ENCODE measurements at regions of chr10 and their contacts with region 1.

Region 1: GRCh38 chr10:14578060-14578952 is 196.4 kb downstream of the FAM107B start:
- DNase-seq: peak; percentile 89 to 92
- H3K4me3 ChIP-seq: peak overlapping the region; percentile 24
- H3K4me3 Mint-ChIP-seq: peak overlapping the region; percentile 70
- H3K27ac Mint-ChIP-seq: peak overlapping the region; percentile 88
- H3K4me1 ChIP-seq: peaks cover 66% of the 10 kb centered on the region
- H3K4me1 Mint-ChIP-seq: peaks cover 38% of the 10 kb centered on the region
- H3K27me3 ChIP-seq: no peaks in the 10 kb centered on the region
- H3K27me3 Mint-ChIP-seq: no peaks in the 10 kb centered on the region
- CTCF ChIP-seq: no peak

Region 2: DNA sequence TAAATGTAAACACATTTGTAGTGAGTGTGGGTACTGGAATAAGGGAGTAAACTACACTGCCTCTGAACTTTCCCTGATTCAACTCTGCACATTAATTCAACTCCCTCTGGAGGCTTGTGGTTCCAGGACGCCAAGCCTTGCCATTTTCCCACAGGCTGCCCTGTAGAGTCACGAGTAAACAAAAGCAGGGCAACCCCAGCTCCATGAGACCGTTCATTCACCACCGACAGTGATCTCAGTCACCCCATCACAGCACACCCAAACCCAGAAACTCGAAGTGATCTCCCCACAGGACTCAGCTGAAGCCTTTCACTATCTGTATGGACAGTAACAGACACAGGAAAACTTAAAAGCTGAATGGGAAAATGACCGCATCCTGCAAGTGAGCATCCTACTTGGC is 28.8 kb before region 1 on chr10:
- CTCF ChIA-PET with region 1: interaction called, 3 read pairs
- POLR2A ChIA-PET with region 1: interaction called, 11 read pairs
- intact Hi-C with region 1: loop called (anchors 1 kb)
- DNase-seq: no peak
- H3K4me3 ChIP-seq: no peak overlapping the region
- H3K4me3 Mint-ChIP-seq: peak overlapping the region; percentile 59
- H3K27ac Mint-ChIP-seq: peak overlapping the region; percentile 93
- H3K4me1 ChIP-seq: peaks cover 91% of the 10 kb centered on the region
- H3K4me1 Mint-ChIP-seq: peaks cover 80% of the 10 kb centered on the region
- H3K27me3 ChIP-seq: no peaks in the 10 kb centered on the region
- H3K27me3 Mint-ChIP-seq: no peaks in the 10 kb centered on the region
- CTCF ChIP-seq: no peak

Region 3: GRCh38 chr10:14604181-14605142 is 26.2 kb after region 1 on chr10:
- CTCF ChIA-PET with region 1: no interaction called
- POLR2A ChIA-PET with region 1: interaction called, 10 read pairs
- intact Hi-C with region 1: no loop called
- DNase-seq: peak; percentile 79 to 89
- H3K4me3 ChIP-seq: peak overlapping the region; percentile 49
- H3K4me3 Mint-ChIP-seq: peak overlapping the region; percentile 80
- H3K27ac Mint-ChIP-seq: peak overlapping the region; percentile 43
- H3K4me1 ChIP-seq: peaks cover 51% of the 10 kb centered on the region
- H3K4me1 Mint-ChIP-seq: peaks cover 40% of the 10 kb centered on the region
- H3K27me3 ChIP-seq: no peaks in the 10 kb centered on the region
- H3K27me3 Mint-ChIP-seq: no peaks in the 10 kb centered on the region
- CTCF ChIP-seq: no peak

Region 4: DNA sequence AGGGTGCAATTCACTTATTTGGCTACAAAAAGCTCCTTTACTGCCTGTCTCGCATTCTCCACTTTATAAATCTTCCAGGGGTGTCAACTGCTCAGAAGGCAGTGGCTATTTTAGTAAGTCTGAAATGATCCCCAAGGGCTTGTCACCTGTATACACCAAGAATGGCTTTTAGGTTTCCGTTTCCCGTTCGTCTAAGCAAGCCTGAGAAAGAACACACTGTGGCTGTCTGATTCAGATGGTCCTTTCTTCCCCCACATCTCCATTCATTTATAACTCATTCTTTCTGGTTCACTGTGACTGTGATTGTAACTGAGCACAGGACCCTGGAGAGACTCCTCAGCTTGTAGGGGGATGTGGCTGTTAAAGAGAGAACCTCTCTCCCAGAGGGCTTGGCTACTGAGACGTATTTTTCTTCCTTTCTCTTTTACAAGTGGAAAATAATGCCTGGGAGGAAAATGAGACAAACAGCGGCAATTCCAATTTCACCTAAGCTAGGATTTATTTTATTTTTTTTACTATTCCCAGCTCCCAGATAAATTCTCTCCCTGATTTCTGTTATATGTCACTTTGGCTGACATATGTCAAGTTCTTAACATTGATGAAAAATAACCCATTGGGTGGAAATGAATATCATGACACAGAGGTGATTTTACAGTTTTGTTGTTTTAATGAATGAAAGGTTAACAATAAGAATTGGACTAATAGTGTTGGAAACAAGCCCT is 67.1 kb after region 1 on chr10:
- CTCF ChIA-PET with region 1: no interaction called
- POLR2A ChIA-PET with region 1: no interaction called
- intact Hi-C with region 1: no loop called
- DNase-seq: no peak
- H3K4me3 ChIP-seq: no peak overlapping the region
- H3K4me3 Mint-ChIP-seq: no peak overlapping the region
- H3K27ac Mint-ChIP-seq: no peak overlapping the region
- H3K4me1 ChIP-seq: peaks cover 9% of the 10 kb centered on the region
- H3K4me1 Mint-ChIP-seq: no peaks in the 10 kb centered on the region
- H3K27me3 ChIP-seq: no peaks in the 10 kb centered on the region
- H3K27me3 Mint-ChIP-seq: no peaks in the 10 kb centered on the region
- CTCF ChIP-seq: no peak

Region 5: GRCh38 chr10:14693891-14694290 is 115.6 kb after region 1 on chr10:
- CTCF ChIA-PET with region 1: no interaction called
- POLR2A ChIA-PET with region 1: no interaction called
- intact Hi-C with region 1: no loop called
- DNase-seq: no peak
- H3K4me3 ChIP-seq: no peak overlapping the region
- H3K4me3 Mint-ChIP-seq: no peak overlapping the region
- H3K27ac Mint-ChIP-seq: no peak overlapping the region
- H3K4me1 ChIP-seq: peaks cover 27% of the 10 kb centered on the region
- H3K4me1 Mint-ChIP-seq: peaks cover 30% of the 10 kb centered on the region
- H3K27me3 ChIP-seq: no peaks in the 10 kb centered on the region
- H3K27me3 Mint-ChIP-seq: no peaks in the 10 kb centered on the region
- CTCF ChIP-seq: no peak

Region 6: DNA sequence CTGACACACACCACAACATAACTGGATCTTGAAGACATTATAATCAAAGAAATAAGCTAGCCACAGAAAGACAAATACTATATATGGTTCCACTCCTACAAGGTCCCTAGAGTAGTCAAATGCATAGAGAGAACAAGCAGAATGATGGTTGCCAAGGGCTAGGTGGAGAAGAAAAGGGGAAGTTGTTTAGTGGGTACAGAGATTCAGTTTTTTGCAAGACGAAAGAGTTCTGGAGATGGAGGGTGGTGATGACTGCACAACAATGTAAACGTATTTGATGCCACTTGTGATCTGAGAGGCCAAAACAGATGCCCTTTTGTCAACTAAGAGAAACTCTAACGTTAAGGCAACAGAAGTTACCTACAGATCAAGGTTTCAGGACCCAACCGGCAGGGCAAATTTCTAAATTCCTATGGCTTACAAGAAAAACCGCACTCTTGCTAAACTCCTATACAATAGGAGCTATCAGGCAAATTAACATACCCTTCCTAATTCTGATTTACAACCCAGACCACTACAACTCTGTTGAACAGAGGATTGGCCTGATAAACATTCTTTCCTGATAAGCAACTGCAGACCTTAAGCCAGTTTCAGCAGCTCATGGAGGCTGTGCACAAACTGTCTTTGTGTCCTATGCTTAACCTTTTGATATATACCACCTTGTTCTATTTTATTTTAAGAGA is 127.4 kb after region 1 on chr10:
- CTCF ChIA-PET with region 1: interaction called, 3 read pairs
- POLR2A ChIA-PET with region 1: no interaction called
- intact Hi-C with region 1: loop called (anchors 1 kb)
- DNase-seq: peak in 1 of 2 experiments; percentile 68
- H3K4me3 ChIP-seq: no peak overlapping the region
- H3K4me3 Mint-ChIP-seq: no peak overlapping the region
- H3K27ac Mint-ChIP-seq: peak overlapping the region; percentile 3
- H3K4me1 ChIP-seq: peaks cover 53% of the 10 kb centered on the region
- H3K4me1 Mint-ChIP-seq: peaks cover 37% of the 10 kb centered on the region
- H3K27me3 ChIP-seq: no peaks in the 10 kb centered on the region
- H3K27me3 Mint-ChIP-seq: no peaks in the 10 kb centered on the region
- CTCF ChIP-seq: no peak

Region 7: GRCh38 chr10:14822879-14823755 is 244.8 kb after region 1 on chr10:
- CTCF ChIA-PET with region 1: interaction called, 3 read pairs
- POLR2A ChIA-PET with region 1: interaction called, 11 read pairs
- intact Hi-C with region 1: no loop called
- DNase-seq: peak in 1 of 2 experiments; percentile 64
- H3K4me3 ChIP-seq: no peak overlapping the region
- H3K4me3 Mint-ChIP-seq: peak overlapping the region; percentile 18
- H3K27ac Mint-ChIP-seq: peak overlapping the region; percentile 71
- H3K4me1 ChIP-seq: peaks cover 32% of the 10 kb centered on the region
- H3K4me1 Mint-ChIP-seq: peaks cover 35% of the 10 kb centered on the region
- H3K27me3 ChIP-seq: no peaks in the 10 kb centered on the region
- H3K27me3 Mint-ChIP-seq: peaks cover 6% of the 10 kb centered on the region
- CTCF ChIP-seq: peak; percentile 76 to 87

Region 8: DNA sequence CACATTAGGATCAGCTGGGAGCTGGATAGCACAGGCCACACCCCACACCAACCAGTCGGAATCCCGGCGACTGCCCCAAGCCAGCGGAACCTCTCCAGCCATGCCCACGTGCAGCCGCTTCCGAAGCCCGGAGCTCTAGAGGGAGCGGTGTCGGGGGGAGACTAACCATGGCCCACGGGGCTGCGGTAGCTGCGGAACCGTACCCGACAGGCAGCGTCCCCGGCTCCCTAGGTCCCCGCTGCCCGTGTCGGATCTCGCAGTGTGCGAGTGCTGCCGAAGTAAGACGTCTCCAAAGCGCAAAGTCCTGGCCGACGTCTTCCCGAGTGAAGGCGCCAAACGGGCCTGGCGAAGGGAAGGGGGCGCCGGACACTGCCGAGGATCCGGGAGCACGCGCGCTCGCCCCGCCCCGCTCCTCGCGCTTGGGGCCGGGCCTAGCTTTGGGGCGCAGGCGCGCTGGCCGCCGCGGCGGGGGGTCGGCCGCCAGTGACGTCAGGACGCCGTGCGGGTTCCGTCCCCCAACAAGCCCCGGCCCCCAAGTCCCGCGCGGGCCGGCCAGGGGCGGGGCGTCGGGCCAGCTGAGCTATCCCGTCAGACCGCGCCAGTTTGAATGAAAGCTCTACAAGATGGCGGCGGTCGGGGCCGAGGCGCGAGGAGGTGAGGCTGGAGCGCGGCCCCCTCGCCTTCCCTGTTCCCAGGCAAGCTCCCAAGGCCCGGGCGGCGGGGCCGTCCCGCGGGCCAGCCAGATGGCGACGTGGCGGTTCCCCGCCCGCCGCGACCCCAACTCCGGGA is 300.2 kb after region 1 on chr10 and contains the start of gene SUV39H2:
- CTCF ChIA-PET with region 1: no interaction called
- POLR2A ChIA-PET with region 1: interaction called, 16 read pairs
- intact Hi-C with region 1: no loop called
- DNase-seq: peak; percentile 96 to 99
- H3K4me3 ChIP-seq: peak within 1 kb of the TSS; percentile 93
- H3K4me3 Mint-ChIP-seq: peak within 1 kb of the TSS; percentile 99
- H3K27ac Mint-ChIP-seq: peak within 1 kb of the TSS; percentile 99
- H3K4me1 ChIP-seq: peaks cover 9% of the 10 kb centered on the region; the same call in 1 of the 2 replicates
- H3K4me1 Mint-ChIP-seq: peaks cover 14% of the 10 kb centered on the region
- H3K27me3 ChIP-seq: no peaks in the 10 kb centered on the region
- H3K27me3 Mint-ChIP-seq: no peaks in the 10 kb centered on the region
- CTCF ChIP-seq: peak in 1 of 2 experiments; percentile 6
- total RNA-seq, gene SUV39H2: 58.3 and 60.4 TPM in 2 replicates